ENCODE measurements at regions of chr17 and their contacts with region 1.

Region 1: GRCh38 chr17:35312790-35313711 is 60.4 kb downstream of the SLFN11 start:
- DNase-seq: peak; percentile 83 to 97 (median 95)
- H3K4me3 ChIP-seq: peak overlapping the region; percentile 83
- H3K4me3 Mint-ChIP-seq: peak overlapping the region; percentile 92 to 100 (median 98)
- H3K27ac ChIP-seq: peak overlapping the region; percentile 87
- H3K27ac Mint-ChIP-seq: peak overlapping the region; percentile 90 to 99 (median 98)
- H3K4me1 ChIP-seq: peaks cover 25% of the 10 kb centered on the region
- H3K4me1 Mint-ChIP-seq: peaks cover 49 to 71% (median 58%) of the 10 kb centered on the region in 3 donors
- H3K27me3 ChIP-seq: no peaks in the 10 kb centered on the region
- H3K27me3 Mint-ChIP-seq: no peaks in the 10 kb centered on the region

Region 2: DNA sequence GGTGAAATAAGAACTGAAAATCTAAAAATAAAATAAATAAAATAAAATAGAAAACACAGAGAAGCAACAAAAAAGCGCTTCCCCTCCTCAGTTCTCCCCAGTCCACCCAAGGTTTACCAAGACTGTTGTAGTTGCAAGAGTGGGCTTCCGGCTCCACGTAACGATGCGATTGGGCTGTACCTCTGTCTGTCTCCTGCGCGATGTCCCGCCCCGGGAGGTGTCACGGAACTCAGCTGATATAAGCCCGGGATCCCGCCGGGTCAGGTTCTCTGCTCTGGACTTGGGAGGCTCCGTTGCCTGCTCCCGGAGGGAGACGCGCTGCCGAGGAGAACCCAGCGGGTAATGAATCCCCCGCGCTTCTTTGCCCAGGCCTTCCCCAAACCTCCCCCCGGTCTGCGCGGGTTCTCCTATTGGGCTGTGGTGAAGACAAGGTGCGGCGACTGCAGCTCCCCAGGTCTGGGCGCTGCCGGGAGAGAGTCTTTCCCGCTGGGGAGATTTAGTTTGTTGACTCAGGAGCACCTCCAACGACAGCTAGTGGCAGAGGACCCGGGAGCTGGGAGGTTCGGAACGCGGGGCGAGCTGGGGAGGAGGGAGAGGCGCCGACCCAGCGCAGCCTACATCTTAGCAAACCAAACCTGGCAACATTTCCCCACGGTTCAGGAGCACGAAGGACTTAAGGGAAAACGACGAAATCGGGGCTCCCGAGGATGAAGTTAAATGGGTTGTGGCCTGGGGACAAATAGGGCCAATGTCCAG is 70.1 kb before region 1 on chr17 and contains the start of gene SLFN5:
- CTCF ChIA-PET with region 1: interaction called, 11 read pairs
- POLR2A ChIA-PET with region 1: interaction called, 10 read pairs
- DNase-seq: peak; percentile 88 to 96 (median 92)
- H3K4me3 ChIP-seq: peak within 1 kb of the TSS; percentile 99
- H3K4me3 Mint-ChIP-seq: peak within 1 kb of the TSS; percentile 97 to 100 (median 99)
- H3K27ac ChIP-seq: peak within 1 kb of the TSS; percentile 96
- H3K27ac Mint-ChIP-seq: peak within 1 kb of the TSS; percentile 98 to 100 (median 99)
- H3K4me1 ChIP-seq: peaks cover 33% of the 10 kb centered on the region
- H3K4me1 Mint-ChIP-seq: peaks cover 64 to 70% (median 68%) of the 10 kb centered on the region in 3 donors
- H3K27me3 ChIP-seq: no peaks in the 10 kb centered on the region
- H3K27me3 Mint-ChIP-seq: peaks cover 0 to 8% of the 10 kb centered on the region in 2 donors
- total RNA-seq, gene SLFN5: 28.6 to 30.2 TPM

Region 3: GRCh38 chr17:35486920-35487732 is 174.1 kb after region 1 on chr17:
- CTCF ChIA-PET with region 1: interaction called, 28 read pairs
- POLR2A ChIA-PET with region 1: interaction called, 15 read pairs
- DNase-seq: peak; percentile 55 to 84 (median 71)
- H3K4me3 ChIP-seq: peak overlapping the region; percentile 92
- H3K4me3 Mint-ChIP-seq: peak overlapping the region; percentile 84 to 100 (median 98)
- H3K27ac ChIP-seq: peak overlapping the region; percentile 85
- H3K27ac Mint-ChIP-seq: peak overlapping the region; percentile 87 to 100 (median 96)
- H3K4me1 ChIP-seq: peaks cover 31% of the 10 kb centered on the region
- H3K4me1 Mint-ChIP-seq: peaks cover 81 to 92% (median 88%) of the 10 kb centered on the region in 3 donors
- H3K27me3 ChIP-seq: no peaks in the 10 kb centered on the region
- H3K27me3 Mint-ChIP-seq: no peaks in the 10 kb centered on the region

Region 4: DNA sequence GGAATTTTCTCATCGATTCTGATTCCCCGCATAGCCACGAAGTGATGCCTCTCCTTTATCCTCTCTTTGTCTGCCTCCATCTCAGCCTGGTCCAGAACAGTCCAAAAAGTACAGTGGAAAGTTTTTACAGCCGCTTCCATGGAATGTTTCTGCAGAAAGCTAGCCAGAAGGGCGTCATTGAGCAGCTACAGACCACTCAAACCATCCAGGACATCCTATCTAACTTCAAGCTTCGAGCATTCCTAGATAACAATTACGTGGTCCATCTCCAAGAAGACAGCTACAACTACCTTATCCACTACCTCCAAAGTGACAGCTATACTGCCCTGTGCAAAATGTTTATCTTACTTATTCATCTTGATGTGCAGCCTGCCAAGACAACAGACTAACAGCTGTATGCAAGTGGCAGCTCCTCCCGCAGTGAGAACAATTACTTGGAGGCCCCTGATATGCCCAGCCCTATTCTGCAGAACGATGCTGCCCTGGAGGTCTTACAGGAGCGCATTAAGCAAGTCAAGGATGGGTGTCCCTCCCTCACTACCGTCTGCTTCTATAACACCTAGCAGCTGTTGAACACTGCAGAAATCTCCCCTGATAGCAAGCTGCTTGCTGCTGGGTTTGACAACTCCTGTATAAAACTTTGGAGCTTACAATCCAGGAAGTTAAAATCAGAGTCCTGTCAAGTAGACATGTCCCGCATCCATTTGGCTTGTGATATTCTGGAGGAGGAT is 185.6 kb after region 1 on chr17:
- CTCF ChIA-PET with region 1: no interaction called
- POLR2A ChIA-PET with region 1: no interaction called
- DNase-seq: no peak
- H3K4me3 ChIP-seq: no peak overlapping the region
- H3K4me3 Mint-ChIP-seq: peak overlapping the region in 3 of 7 donors; percentile 3 to 52 (median 32)
- H3K27ac ChIP-seq: no peak overlapping the region
- H3K27ac Mint-ChIP-seq: peak overlapping the region in 7 of 8 donors; percentile 19 to 88 (median 72)
- H3K4me1 ChIP-seq: peaks cover 17% of the 10 kb centered on the region
- H3K4me1 Mint-ChIP-seq: peaks cover 63 to 87% (median 79%) of the 10 kb centered on the region in 3 donors
- H3K27me3 ChIP-seq: no peaks in the 10 kb centered on the region
- H3K27me3 Mint-ChIP-seq: no peaks in the 10 kb centered on the region

Region 5: DNA sequence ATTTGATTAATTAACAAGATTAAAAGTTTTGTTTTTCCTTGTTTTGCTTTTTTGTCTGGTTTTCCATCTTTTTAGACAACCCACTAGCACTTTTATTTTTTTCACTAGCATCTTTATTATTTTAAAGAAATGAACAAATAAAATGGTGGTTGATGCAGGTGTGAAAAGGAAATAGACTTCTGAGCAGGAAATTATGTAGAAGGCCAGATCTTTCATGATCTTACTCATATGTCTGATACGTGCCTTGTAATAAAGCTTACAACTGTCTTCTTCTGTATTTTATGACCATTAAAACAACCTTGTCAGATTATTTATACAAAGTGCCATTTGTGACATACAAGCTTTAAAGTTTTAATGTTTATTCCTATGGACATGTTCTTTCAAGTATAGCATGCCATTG is 218.1 kb after region 1 on chr17:
- CTCF ChIA-PET with region 1: interaction called, 167 read pairs
- POLR2A ChIA-PET with region 1: interaction called, 22 read pairs
- DNase-seq: no peak
- H3K4me3 ChIP-seq: no peak overlapping the region
- H3K4me3 Mint-ChIP-seq: peak overlapping the region; percentile 78 to 87 (median 84)
- H3K27ac ChIP-seq: peak overlapping the region; percentile 55
- H3K27ac Mint-ChIP-seq: peak overlapping the region; percentile 86 to 100 (median 94)
- H3K4me1 ChIP-seq: peaks cover 50% of the 10 kb centered on the region
- H3K4me1 Mint-ChIP-seq: peaks cover 57 to 81% (median 73%) of the 10 kb centered on the region in 3 donors
- H3K27me3 ChIP-seq: no peaks in the 10 kb centered on the region
- H3K27me3 Mint-ChIP-seq: no peaks in the 10 kb centered on the region

Measured in CD8-positive, alpha-beta memory T cell (primary cell).